BJ (cell line): ENCODE measurements at regions of chr18 and their contacts with region 1.

Region 1: DNA sequence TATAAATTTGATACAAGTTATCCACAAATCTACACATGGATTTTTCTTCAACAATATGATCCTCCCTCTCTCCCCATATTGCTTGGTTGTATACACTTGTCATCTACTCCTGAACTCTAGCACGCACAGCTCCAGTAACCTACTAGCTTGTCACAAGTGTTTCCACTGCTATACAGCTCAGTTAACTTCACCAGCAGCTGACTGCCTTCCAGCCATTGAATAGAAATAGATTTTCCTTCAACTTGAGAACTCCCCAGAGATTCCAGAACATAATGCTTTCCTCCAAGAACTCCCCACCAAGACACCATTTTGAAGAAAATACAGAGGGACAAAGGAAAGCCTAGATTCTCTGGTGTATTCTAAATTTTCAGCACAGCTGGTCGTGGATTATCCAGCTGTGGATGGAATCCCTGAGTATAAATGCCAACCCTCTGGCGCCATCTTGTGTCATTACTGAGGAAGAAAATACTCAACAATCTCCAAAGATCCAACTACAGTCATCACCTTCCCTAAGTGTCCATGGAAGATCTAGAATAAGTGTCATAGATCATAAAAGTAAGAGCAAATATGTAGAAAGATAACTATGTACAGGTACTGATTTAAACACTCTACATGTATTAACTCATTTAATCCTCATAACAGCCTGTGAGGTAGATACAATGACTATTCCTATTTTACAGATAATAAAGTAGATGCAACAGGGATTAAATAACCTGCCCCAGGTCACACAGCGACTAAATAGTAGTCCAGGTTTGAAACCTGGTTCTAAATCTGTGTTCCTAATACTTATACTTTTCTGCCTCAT is 156.7 kb downstream of the ARHGAP28 start:
- DNase-seq: no peak
- H3K4me3 ChIP-seq: no peak overlapping the region
- H3K27me3 ChIP-seq: no peaks in the 10 kb centered on the region
- CTCF ChIP-seq: peak; percentile 65

Region 2: DNA sequence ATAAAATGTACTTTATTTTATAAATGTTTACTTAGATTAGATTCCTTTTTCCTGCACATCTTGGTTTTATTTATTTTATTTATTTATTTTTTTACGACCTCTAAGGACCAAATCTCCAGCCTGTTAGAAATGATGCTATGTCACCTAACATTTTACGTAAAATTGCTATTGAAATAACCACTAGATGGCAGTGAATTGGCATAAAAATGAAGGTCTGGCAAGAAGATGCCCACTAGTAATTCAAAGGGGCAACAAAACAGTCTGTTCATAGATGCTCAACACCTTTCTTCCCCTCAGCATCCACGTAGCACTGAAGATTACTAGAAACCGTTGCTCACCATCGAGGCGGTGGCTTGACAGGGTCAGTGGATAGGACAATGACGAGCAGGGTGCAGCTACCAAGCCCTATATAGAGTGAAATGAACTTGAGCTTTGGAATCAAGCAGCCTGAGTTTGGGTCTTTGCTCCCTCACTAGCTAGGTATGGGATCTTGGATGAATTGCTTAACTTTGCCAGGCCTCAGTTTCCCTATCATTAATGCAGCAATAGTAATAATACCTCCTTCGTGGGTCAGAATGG is 342.8 kb before region 1 on chr18:
- CTCF ChIA-PET with region 1: interaction called, 146 read pairs
- POLR2A ChIA-PET with region 1: no interaction called
- DNase-seq: no peak
- H3K4me3 ChIP-seq: no peak overlapping the region
- H3K27me3 ChIP-seq: no peaks in the 10 kb centered on the region
- CTCF ChIP-seq: peak; percentile 50; the same call in 1 of the 2 replicates

Region 3: DNA sequence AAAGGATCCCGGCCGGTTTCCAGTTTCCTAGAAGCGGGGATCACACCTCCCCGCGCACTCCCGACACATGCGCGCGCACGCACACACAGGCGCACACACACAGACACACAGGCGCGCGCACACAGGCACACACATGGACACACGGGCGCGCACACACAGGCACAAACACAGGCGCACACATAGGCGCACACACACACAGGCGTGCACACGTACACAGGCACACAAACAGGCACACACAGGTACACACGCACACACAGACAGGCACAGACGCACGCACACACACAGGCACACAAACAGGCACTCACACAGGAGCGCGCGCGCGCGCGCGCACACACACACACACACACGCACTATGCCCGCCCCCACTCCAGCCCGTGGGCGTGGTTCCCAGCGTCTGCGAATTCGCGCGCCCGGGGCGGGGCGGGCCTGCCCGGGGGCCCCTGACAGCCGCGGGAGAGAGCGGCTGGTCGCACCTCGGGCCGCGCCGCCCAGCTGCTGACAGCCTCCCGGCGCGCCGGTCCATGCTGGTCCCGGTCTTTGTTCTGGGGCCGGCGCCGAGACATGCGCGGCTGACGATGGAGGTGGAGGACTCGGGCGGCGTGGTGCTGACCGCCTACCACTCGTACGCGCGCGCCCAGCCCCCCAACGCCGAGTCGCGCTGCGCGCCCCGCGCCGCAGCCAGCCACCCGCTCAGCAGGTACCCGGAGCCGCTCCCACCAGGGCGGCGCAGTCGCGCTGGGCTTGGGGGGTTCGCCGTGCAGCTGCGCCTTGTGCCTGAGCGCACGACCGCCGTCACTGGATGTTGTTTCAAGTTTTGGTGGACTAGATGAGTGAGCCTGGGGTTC is 156.7 kb before region 1 on chr18 and contains the start of gene ARHGAP28:
- CTCF ChIA-PET with region 1: interaction called, 14 read pairs
- POLR2A ChIA-PET with region 1: no interaction called
- DNase-seq: peak; percentile 77
- H3K4me3 ChIP-seq: peak within 1 kb of the TSS; percentile 77
- H3K27me3 ChIP-seq: no peaks in the 10 kb centered on the region
- CTCF ChIP-seq: peak; percentile 28; the same call in 1 of the 2 replicates
- polyA plus RNA-seq, gene ARHGAP28: 5.3 and 9.5 TPM in 2 replicates